IMR-90 (cell line): ENCODE measurements at regions of chr4 and their contacts with region 1.

Region 1: GRCh38 chr4:94235825-94236224 is 28.2 kb downstream of the SMARCAD1 start:
- DNase-seq: peak; percentile 16
- ATAC-seq: no peak
- H3K4me3 ChIP-seq: no peak overlapping the region
- H3K27ac ChIP-seq: no peak overlapping the region
- H3K4me1 ChIP-seq: peaks cover 2% of the 10 kb centered on the region; the same call in 1 of the 2 replicates
- H3K27me3 ChIP-seq: no peaks in the 10 kb centered on the region
- CTCF ChIP-seq: no peak
- POLR2A ChIP-seq: no peak
- RAD21 ChIP-seq: no peak

Region 2: DNA sequence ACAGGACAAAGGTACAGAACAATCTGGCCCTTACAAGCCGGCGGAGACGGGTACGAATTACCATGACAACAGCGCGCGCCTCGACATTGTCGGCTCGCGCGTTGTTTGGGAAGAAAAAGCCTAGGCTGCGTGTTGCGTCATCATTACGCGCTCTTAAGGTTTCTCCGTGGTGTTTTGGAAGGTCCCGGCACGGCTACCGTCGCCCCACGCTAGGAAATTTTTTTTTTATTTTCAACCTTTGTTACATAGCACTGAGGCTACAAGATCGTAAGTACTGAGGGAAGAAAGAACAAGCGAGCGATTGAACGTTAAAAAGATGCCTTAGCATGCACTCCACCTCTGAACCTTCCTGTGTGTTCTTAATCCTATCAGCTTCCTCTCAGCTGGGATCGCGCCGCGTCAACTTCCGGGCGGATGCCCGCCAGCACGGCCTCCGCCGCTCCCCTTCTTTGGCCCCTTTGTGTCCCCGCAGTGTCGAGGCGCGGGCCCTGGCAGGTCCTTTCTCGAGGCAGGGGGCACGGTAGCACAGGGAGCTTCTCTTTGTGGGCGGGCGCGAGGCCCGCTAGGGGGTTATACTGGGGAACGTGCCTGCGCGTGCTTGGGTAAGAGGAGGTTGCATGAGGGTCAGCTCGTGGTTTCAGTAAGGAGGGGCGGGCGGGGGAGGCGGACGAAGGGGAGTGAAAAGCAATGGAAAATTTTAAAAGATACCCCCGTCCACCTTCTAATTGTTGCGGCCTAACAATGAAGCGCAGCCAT is 28.2 kb before region 1 on chr4 and contains the start of gene SMARCAD1:
- CTCF ChIA-PET with region 1: no interaction called
- POLR2A ChIA-PET with region 1: interaction called, 11 read pairs
- dilution Hi-C with region 1: no loop called
- in situ Hi-C with region 1: no loop called
- intact Hi-C with region 1: no loop called
- DNase-seq: peak; percentile 97
- ATAC-seq: peak; percentile 92
- H3K4me3 ChIP-seq: peak within 1 kb of the TSS; percentile 69
- H3K27ac ChIP-seq: peak within 1 kb of the TSS; percentile 97
- H3K4me1 ChIP-seq: peaks cover 2% of the 10 kb centered on the region; the same call in 1 of the 2 replicates
- H3K27me3 ChIP-seq: no peaks in the 10 kb centered on the region
- CTCF ChIP-seq: no peak
- POLR2A ChIP-seq: peak; percentile 92
- RAD21 ChIP-seq: no peak
- total RNA-seq, gene SMARCAD1: 35.3 and 45.3 TPM in 2 replicates

Region 3: GRCh38 chr4:94583914-94584641 is 348.3 kb after region 1 on chr4:
- CTCF ChIA-PET with region 1: no interaction called
- POLR2A ChIA-PET with region 1: no interaction called
- dilution Hi-C with region 1: no loop called
- in situ Hi-C with region 1: no loop called
- intact Hi-C with region 1: no loop called
- DNase-seq: no peak
- ATAC-seq: no peak
- H3K4me3 ChIP-seq: no peak overlapping the region
- H3K27ac ChIP-seq: no peak overlapping the region
- H3K4me1 ChIP-seq: peaks cover 2% of the 10 kb centered on the region; the same call in 1 of the 2 replicates
- H3K27me3 ChIP-seq: no peaks in the 10 kb centered on the region
- CTCF ChIP-seq: no peak
- POLR2A ChIP-seq: no peak
- RAD21 ChIP-seq: no peak